Activated T-helper 2 cell treated with anti-CD3 and anti-CD28 coated beads, Interferon-gamma antibody, Interleukin-2, Interleukin-4, amounts not matched to agents 10 μg/mL and 5 μg/mL and 100 μg/mL, durations not matched to agents 14 hours and 24 hours and 36 hours (primary cell): ENCODE measurements at regions of chr1 and their contacts with region 1.

Region 1: GRCh38 chr1:62436466-62437256 is at the start of gene USP1:
- DNase-seq: peak; percentile 99
- H3K4me3 Mint-ChIP-seq: peak within 1 kb of the TSS; percentile 95
- H3K27ac Mint-ChIP-seq: peak within 1 kb of the TSS; percentile 97
- H3K4me1 Mint-ChIP-seq: peaks cover 26% of the 10 kb centered on the region
- H3K27me3 Mint-ChIP-seq: no peaks in the 10 kb centered on the region
- total RNA-seq, gene USP1: 68.0 and 69.8 TPM in 2 replicates

Region 2: GRCh38 chr1:61724813-61725694 is 711.6 kb before region 1 on chr1 and contains the start of gene TM2D1:
- intact Hi-C with region 1: loop called (anchors 10 kb)
- DNase-seq: peak; percentile 84
- H3K4me3 Mint-ChIP-seq: peak within 1 kb of the TSS; percentile 89
- H3K27ac Mint-ChIP-seq: peak within 1 kb of the TSS; percentile 92
- H3K4me1 Mint-ChIP-seq: peaks cover 14% of the 10 kb centered on the region
- H3K27me3 Mint-ChIP-seq: no peaks in the 10 kb centered on the region
- total RNA-seq, gene TM2D1: 32.3 and 32.6 TPM in 2 replicates

Region 3: DNA sequence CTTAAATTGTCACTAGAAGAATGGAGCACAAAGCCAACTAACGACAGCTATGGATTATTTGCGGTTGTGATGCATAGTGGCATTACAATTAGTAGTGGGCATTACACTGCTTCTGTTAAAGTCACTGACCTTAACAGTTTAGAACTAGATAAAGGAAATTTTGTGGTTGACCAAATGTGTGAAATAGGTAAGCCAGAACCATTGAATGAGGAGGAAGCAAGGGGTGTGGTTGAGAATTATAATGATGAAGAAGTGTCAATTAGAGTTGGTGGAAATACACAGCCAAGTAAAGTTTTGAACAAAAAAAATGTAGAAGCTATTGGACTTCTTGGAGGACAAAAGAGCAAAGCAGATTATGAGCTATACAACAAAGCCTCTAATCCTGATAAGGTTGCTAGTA is 13.6 kb after region 1 on chr1:
- intact Hi-C with region 1: loop called (anchors 2 kb)
- DNase-seq: no peak
- H3K4me3 Mint-ChIP-seq: no peak overlapping the region
- H3K27ac Mint-ChIP-seq: no peak overlapping the region
- H3K4me1 Mint-ChIP-seq: peaks cover 34% of the 10 kb centered on the region
- H3K27me3 Mint-ChIP-seq: no peaks in the 10 kb centered on the region

Region 4: GRCh38 chr1:62687903-62688686 is 251.4 kb after region 1 on chr1 and contains the start of gene DOCK7:
- intact Hi-C with region 1: loop called (anchors 2 kb)
- DNase-seq: peak; percentile 52
- H3K4me3 Mint-ChIP-seq: peak within 1 kb of the TSS; percentile 86
- H3K27ac Mint-ChIP-seq: peak within 1 kb of the TSS; percentile 74
- H3K4me1 Mint-ChIP-seq: peaks cover 26% of the 10 kb centered on the region
- H3K27me3 Mint-ChIP-seq: no peaks in the 10 kb centered on the region
- total RNA-seq, gene DOCK7: 17.8 and 21.2 TPM in 2 replicates

Region 5: DNA sequence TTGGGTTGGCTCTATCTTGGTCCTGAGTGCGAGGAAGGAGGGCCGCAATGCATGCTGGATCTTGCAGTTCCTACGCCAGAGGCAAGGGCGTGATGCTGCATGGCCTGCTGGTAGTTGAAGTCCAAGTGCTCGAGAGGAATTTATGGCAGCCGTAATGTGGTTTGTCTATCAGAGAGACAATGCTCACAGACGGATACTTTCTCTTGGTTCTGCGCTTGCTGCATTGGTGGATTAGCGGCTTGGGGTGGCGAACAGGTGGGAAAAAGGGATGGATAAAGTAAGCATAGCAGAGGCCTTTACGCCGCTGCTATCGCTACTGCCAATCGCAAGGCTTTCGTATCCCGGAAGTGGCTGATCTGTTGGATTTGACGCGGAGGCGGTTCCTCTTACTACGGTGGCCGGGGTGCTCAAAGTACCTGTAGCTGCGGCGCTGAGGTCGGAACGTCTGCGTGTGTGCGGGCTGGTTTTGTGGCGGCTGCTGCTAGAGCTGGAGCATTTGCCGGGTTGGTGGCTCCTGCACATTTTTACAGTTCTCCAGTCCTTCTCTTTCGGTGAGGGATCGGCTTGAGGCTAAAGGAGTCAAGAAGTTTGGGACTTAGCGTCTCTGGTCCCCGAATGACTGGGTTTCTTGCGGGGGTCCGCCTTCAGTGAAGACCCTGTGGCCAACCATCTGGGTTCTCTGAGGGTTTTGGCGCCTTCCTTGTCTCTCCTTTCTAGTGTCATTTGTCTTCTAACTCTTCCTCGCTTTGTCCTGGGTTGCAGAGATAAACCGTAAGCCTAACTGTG is 347.3 kb after region 1 on chr1 and contains the start of gene ATG4C:
- intact Hi-C with region 1: loop called (anchors 1 kb)
- DNase-seq: peak; percentile 90
- H3K4me3 Mint-ChIP-seq: no peak within 1 kb of the TSS
- H3K27ac Mint-ChIP-seq: no peak within 1 kb of the TSS
- H3K4me1 Mint-ChIP-seq: peaks cover 3% of the 10 kb centered on the region
- H3K27me3 Mint-ChIP-seq: peaks cover 14% of the 10 kb centered on the region
- total RNA-seq, gene ATG4C: 8.2 and 10.1 TPM in 2 replicates

Region 6: DNA sequence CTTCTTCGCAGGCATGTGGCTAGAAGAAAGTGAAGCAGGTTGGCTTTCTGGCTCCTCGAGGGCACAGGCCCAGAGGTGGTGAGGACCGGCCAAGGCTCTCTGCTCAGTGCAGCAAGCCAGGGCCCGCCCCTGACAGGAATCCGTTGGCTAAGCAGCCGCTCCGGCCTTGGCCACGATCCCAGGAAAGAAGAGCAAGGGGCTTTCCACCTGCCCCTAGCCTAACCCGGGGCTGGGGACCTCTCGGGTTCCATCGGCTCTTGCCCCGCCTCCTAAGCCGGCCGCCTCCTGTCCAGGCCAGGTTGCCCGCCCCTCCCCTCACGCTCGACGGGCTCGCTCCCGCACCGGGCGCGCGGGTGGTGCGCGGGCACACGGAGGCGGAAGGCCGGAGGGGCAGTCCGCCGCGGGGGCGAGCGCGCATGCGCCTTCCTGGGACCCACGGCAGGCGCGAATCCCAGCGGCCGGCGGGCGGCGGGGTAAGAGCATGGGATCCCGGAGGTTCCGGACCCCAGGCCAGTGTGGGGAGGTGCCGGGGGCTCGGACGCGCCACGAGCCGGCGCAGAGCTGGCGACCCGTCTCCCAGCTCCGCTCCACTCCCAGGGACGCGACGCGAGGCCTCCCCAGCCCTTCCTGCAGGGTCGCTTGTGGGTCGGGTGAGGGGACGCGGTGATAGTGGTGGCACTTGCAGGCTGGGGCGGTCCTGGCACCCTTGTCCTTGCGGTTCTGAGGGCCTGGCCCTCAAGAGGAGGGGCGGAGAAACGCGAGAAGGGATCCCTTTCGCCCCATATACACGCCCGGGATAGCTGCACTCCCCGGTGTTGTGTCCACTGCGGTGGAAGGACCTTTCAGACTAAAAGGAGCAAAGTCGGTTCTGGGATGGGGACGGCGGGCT is 930.8 kb after region 1 on chr1 and contains the start of gene ALG6:
- intact Hi-C with region 1: loop called (anchors 10 kb)
- DNase-seq: peak; percentile 89
- H3K4me3 Mint-ChIP-seq: peak within 1 kb of the TSS; percentile 96
- H3K27ac Mint-ChIP-seq: peak within 1 kb of the TSS; percentile 84
- H3K4me1 Mint-ChIP-seq: peaks cover 19% of the 10 kb centered on the region
- H3K27me3 Mint-ChIP-seq: peaks cover 13% of the 10 kb centered on the region
- total RNA-seq, gene ALG6: 25.3 and 25.5 TPM in 2 replicates

Region 7: DNA sequence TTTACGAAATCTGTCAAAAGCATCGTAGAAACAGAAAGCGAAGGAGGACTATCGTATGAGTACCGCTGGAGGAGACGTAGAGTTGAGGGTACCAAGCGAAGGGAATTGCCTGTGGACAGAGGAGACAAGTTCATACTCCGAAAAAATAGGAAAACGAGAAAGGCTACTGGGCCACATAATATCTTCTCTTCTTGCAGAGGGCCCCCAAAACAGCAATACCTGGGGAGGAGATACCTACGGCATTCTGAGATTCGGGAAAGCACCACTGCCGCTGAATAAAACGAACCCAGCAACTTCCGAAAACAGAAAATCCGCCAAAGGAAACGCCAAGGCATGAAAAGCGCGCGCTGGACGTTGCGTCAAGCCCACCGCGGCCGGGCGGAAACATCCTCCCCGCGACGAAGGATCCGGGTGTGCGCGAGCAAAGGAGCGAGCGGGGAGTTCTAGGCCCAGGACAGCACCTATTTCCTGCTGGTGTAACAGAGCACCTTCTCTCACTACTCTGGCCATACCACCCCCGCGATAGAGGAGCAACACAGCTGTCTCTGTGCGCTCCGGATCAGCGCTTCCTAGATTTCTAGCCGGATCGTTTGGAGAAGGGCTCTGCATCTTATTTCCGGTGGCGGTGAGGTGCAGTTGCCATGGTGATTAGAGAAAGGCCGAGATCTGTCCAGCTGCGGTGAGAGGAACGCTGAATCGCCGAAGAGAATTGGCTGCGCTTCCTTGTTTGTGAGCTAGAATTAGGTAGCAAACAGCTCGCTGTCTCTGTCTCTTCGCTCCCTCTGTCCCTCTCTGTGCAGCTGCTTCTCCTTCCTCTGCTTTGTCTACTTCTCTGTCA is 1086.4 kb after region 1 on chr1 and contains the starts of genes EFCAB7 and ITGB3BP:
- intact Hi-C with region 1: loop called (anchors 10 kb)
- DNase-seq: peak; percentile 82
- H3K4me3 Mint-ChIP-seq: peak within 1 kb of the TSS; percentile 97
- H3K27ac Mint-ChIP-seq: peak within 1 kb of the TSS; percentile 98
- H3K4me1 Mint-ChIP-seq: peaks cover 36% of the 10 kb centered on the region
- H3K27me3 Mint-ChIP-seq: no peaks in the 10 kb centered on the region
- total RNA-seq, gene EFCAB7: 6.5 and 6.6 TPM in 2 replicates
- total RNA-seq, gene ITGB3BP: 49.3 and 52.2 TPM in 2 replicates